ENCODE measurements at regions of chr16 and their contacts with region 1.

Region 1: GRCh38 chr16:29973384-29974246 is at the start of gene TAOK2:
- DNase-seq: peak; percentile 99
- ATAC-seq: peak; percentile 99
- H3K4me3 ChIP-seq: peak within 1 kb of the TSS; percentile 69
- H3K27ac ChIP-seq: peak within 1 kb of the TSS; percentile 92
- H3K4me1 ChIP-seq: peaks cover 13% of the 10 kb centered on the region; the same call in 1 of the 2 replicates
- H3K27me3 ChIP-seq: no peaks in the 10 kb centered on the region
- CTCF ChIP-seq: no peak
- POLR2A ChIP-seq: peak; percentile 83
- RAD21 ChIP-seq: no peak; the same call in 1 of the 2 replicates
- total RNA-seq, gene TAOK2: 31.7 and 32.8 TPM in 2 replicates

Region 2: GRCh38 chr16:29784901-29785500 is 188.6 kb before region 1 on chr16:
- CTCF ChIA-PET with region 1: no interaction called
- POLR2A ChIA-PET with region 1: no interaction called
- dilution Hi-C with region 1: no loop called
- in situ Hi-C with region 1: no loop called
- intact Hi-C with region 1: no loop called
- DNase-seq: peak; percentile 22
- ATAC-seq: peak; percentile 94
- H3K4me3 ChIP-seq: peak overlapping the region; percentile 12; the same call in 1 of the 2 replicates
- H3K27ac ChIP-seq: no peak overlapping the region
- H3K4me1 ChIP-seq: peaks cover 4% of the 10 kb centered on the region
- H3K27me3 ChIP-seq: peaks cover 21% of the 10 kb centered on the region
- CTCF ChIP-seq: peak; percentile 61
- POLR2A ChIP-seq: no peak
- RAD21 ChIP-seq: peak; percentile 26; the same call in 1 of the 2 replicates

Region 3: GRCh38 chr16:29862884-29863668 is 110.5 kb before region 1 on chr16 and contains the start of gene CDIPT:
- CTCF ChIA-PET with region 1: no interaction called
- POLR2A ChIA-PET with region 1: no interaction called
- dilution Hi-C with region 1: no loop called
- in situ Hi-C with region 1: no loop called
- intact Hi-C with region 1: loop called (anchors 2 kb)
- DNase-seq: peak; percentile 97
- ATAC-seq: peak; percentile 98
- H3K4me3 ChIP-seq: peak within 1 kb of the TSS; percentile 77
- H3K27ac ChIP-seq: peak within 1 kb of the TSS; percentile 86
- H3K4me1 ChIP-seq: peaks cover 3% of the 10 kb centered on the region; the same call in 1 of the 2 replicates
- H3K27me3 ChIP-seq: no peaks in the 10 kb centered on the region
- CTCF ChIP-seq: peak; percentile 82
- POLR2A ChIP-seq: no peak
- RAD21 ChIP-seq: peak; percentile 33
- total RNA-seq, gene CDIPT: 47.1 and 48.3 TPM in 2 replicates

Region 4: DNA sequence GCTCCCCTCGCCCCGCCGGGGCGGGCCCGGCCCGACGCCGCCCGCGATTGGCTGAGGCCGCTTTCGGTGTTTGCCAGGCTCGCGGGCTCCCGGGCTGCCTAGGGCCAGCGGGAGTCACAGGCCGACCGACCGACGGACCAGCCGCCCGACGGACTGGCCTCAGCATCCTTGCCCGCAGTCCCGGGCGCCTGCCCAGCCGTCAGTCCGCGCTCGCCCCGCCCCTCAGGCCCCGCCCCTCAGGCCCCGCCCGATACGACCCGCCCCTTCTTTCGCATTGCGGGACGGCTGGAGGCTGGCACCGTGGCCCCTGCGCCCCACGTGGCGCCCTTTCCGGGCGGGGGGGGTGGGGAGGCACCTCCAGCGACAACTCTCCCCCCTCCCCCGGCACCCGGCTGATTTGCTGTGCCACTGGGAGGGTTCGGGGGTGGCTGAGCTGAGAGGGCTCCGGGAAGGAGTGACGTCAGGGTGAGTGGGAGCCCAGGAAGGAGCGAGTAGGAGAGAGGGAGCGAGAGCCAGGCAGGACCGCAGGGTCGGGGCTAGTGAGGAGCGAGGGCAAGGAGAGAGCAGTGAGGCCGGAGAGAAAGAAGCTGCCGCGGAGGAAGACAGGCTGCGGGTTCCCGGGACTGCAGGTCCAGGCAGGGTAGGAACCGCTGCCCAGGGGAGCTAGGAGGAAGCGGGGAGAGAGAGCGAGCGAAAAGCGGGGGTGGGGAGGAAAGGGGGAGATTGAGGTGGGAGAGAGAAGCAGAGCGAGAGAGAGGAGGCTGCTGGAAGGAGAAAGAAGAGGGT is 73.3 kb before region 1 on chr16 and contains the start of gene ASPHD1:
- CTCF ChIA-PET with region 1: no interaction called
- POLR2A ChIA-PET with region 1: no interaction called
- dilution Hi-C with region 1: no loop called
- in situ Hi-C with region 1: no loop called
- intact Hi-C with region 1: loop called (anchors 1 kb)
- DNase-seq: peak; percentile 86
- ATAC-seq: peak; percentile 79
- H3K4me3 ChIP-seq: peak within 1 kb of the TSS; percentile 87
- H3K27ac ChIP-seq: peak within 1 kb of the TSS; percentile 88
- H3K4me1 ChIP-seq: peaks cover 10% of the 10 kb centered on the region
- H3K27me3 ChIP-seq: peaks cover 5% of the 10 kb centered on the region; the same call in 1 of the 2 replicates
- CTCF ChIP-seq: no peak
- POLR2A ChIP-seq: peak; percentile 84
- RAD21 ChIP-seq: no peak
- total RNA-seq, gene ASPHD1: 4.1 and 4.2 TPM in 2 replicates

Region 5: DNA sequence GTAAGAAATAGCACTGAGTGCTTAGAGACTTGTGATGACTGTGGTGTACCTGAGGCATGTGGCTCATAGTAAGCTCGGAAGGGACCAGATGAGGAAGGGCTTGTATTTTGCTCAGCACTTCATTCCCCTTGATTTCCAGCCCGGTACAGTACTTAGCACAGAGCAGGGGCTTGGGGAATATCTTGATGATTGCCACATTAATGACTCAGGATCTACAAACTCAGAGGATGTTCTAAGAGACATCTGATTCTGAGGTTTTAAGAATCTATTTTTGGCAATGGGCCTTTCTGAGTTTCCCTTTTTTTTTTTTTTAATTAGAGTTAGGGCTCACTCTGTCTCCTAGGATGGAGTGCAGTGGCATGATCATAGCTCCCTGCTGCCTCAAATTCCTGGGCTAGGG is 64.2 kb before region 1 on chr16:
- CTCF ChIA-PET with region 1: no interaction called
- POLR2A ChIA-PET with region 1: interaction called, 13 read pairs
- dilution Hi-C with region 1: no loop called
- in situ Hi-C with region 1: no loop called
- intact Hi-C with region 1: no loop called
- DNase-seq: peak; percentile 65
- ATAC-seq: peak; percentile 36; the same call in 1 of the 2 replicates
- H3K4me3 ChIP-seq: no peak overlapping the region
- H3K27ac ChIP-seq: no peak overlapping the region
- H3K4me1 ChIP-seq: no peaks in the 10 kb centered on the region; the same call in 1 of the 2 replicates
- H3K27me3 ChIP-seq: no peaks in the 10 kb centered on the region
- CTCF ChIP-seq: no peak
- POLR2A ChIP-seq: no peak
- RAD21 ChIP-seq: no peak

Region 6: GRCh38 chr16:29926005-29926710 is 47.5 kb before region 1 on chr16 and contains the start of gene KCTD13:
- CTCF ChIA-PET with region 1: no interaction called
- POLR2A ChIA-PET with region 1: no interaction called
- dilution Hi-C with region 1: no loop called
- in situ Hi-C with region 1: no loop called
- intact Hi-C with region 1: loop called (anchors 5 kb)
- DNase-seq: peak; percentile 73
- ATAC-seq: peak; percentile 97
- H3K4me3 ChIP-seq: peak within 1 kb of the TSS; percentile 79
- H3K27ac ChIP-seq: peak within 1 kb of the TSS; percentile 92
- H3K4me1 ChIP-seq: peaks cover 10% of the 10 kb centered on the region
- H3K27me3 ChIP-seq: no peaks in the 10 kb centered on the region
- CTCF ChIP-seq: no peak
- POLR2A ChIP-seq: peak; percentile 67
- RAD21 ChIP-seq: no peak; the same call in 1 of the 2 replicates
- total RNA-seq, gene KCTD13: 3.1 and 4.1 TPM in 2 replicates